IMR-90 (cell line): ENCODE measurements at regions of chrX and their contacts with region 1.

Region 1: GRCh38 chrX:30822068-30822681 is 66.9 kb downstream of the TAB3 start:
- DNase-seq: no peak
- ATAC-seq: peak; percentile 42; the same call in 1 of the 2 replicates
- H3K4me3 ChIP-seq: no peak overlapping the region
- H3K27ac ChIP-seq: no peak overlapping the region
- H3K4me1 ChIP-seq: no peaks in the 10 kb centered on the region
- H3K27me3 ChIP-seq: no peaks in the 10 kb centered on the region; the same call in 1 of the 2 replicates
- CTCF ChIP-seq: 0 out of 2 replicates have a peak, but pooled peaks have one; percentile 2
- POLR2A ChIP-seq: no peak
- RAD21 ChIP-seq: no peak

Region 2: DNA sequence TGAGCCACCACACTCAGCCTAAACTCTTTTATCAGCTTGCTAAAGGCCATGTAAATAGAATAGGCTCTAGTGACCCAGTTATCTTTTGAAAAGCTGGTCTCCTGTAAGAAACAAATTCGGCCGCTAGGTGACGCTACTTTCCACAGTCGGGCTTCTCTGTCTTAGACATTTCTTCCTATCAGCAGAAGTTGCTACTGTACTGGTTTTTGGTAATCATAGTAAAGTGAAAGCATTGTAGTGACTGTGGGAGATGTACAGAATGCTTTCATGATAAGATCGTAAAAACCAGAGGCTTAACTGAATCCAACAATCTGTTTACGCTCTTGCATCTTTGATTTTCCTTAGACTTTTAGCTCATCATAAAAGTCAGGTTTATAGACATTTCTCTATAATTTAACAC is 86.3 kb before region 1 on chrX:
- CTCF ChIA-PET with region 1: interaction called, 11 read pairs
- POLR2A ChIA-PET with region 1: no interaction called
- dilution Hi-C with region 1: no loop called
- in situ Hi-C with region 1: no loop called
- intact Hi-C with region 1: no loop called
- DNase-seq: peak; percentile 56
- ATAC-seq: peak; percentile 86
- H3K4me3 ChIP-seq: no peak overlapping the region
- H3K27ac ChIP-seq: no peak overlapping the region
- H3K4me1 ChIP-seq: no peaks in the 10 kb centered on the region
- H3K27me3 ChIP-seq: no peaks in the 10 kb centered on the region
- CTCF ChIP-seq: peak; percentile 64
- POLR2A ChIP-seq: no peak
- RAD21 ChIP-seq: peak; percentile 60

Region 3: DNA sequence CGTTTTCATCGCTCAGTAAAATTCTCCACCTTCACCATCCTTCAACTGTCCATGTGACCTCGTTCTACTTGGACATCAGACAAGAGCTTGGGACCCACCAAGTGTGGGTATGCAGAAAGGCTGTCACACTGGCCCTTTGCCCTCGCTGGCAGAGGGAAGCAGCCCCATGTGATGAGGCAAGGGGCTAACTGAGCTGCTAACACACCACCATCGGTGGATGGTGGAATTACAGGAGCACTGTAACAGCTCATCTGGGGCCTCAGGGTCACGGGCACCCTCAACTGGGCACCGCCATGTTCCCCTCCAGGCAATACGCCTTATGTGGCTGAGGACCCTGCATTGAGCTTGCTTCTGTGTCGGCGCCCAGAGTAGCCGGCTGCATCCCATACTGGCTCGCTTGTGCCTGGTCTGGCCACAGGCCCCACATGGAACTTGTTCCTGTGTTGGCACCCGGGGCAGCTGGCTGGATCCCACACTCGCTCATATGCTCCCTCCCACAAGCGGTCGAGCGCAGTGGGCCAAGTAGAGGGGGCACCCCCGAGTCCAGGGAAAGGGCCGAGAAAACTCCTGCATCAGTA is 42.6 kb before region 1 on chrX:
- CTCF ChIA-PET with region 1: no interaction called
- POLR2A ChIA-PET with region 1: no interaction called
- dilution Hi-C with region 1: no loop called
- in situ Hi-C with region 1: loop called (anchors 5 kb)
- intact Hi-C with region 1: no loop called
- DNase-seq: no peak
- ATAC-seq: no peak
- H3K4me3 ChIP-seq: no peak overlapping the region
- H3K27ac ChIP-seq: no peak overlapping the region
- H3K4me1 ChIP-seq: no peaks in the 10 kb centered on the region
- H3K27me3 ChIP-seq: no peaks in the 10 kb centered on the region
- CTCF ChIP-seq: no peak
- POLR2A ChIP-seq: no peak
- RAD21 ChIP-seq: no peak

Region 4: DNA sequence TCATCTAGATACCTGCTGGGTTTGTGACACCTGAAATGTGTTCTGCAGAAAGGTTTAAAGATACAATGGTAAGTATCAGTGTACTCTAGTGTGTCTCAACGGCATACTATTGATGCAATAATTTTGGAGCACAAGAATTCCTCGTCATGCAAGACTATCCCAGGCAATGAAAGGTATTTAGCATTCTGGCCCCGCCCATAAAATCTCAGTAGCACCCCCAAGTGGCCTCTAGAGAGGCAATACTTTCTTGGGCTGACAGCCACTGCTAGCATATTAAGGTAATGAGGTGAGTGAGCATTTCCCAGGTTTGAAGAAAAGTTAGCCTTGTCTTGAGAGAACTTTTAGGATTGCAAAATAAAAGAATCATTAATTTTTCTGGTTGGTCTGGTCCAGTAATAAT is 42.8 kb after region 1 on chrX:
- CTCF ChIA-PET with region 1: no interaction called
- POLR2A ChIA-PET with region 1: no interaction called
- dilution Hi-C with region 1: no loop called
- in situ Hi-C with region 1: no loop called
- intact Hi-C with region 1: no loop called
- DNase-seq: no peak
- ATAC-seq: no peak
- H3K4me3 ChIP-seq: no peak overlapping the region
- H3K27ac ChIP-seq: no peak overlapping the region
- H3K4me1 ChIP-seq: peaks cover 2% of the 10 kb centered on the region; the same call in 1 of the 2 replicates
- H3K27me3 ChIP-seq: no peaks in the 10 kb centered on the region
- CTCF ChIP-seq: 0 out of 2 replicates have a peak, but pooled peaks have one; percentile 10
- POLR2A ChIP-seq: no peak
- RAD21 ChIP-seq: no peak